Transverse colon (tissue), 4 donors: ENCODE measurements at regions of chr1 and their contacts with region 1.

Region 1: DNA sequence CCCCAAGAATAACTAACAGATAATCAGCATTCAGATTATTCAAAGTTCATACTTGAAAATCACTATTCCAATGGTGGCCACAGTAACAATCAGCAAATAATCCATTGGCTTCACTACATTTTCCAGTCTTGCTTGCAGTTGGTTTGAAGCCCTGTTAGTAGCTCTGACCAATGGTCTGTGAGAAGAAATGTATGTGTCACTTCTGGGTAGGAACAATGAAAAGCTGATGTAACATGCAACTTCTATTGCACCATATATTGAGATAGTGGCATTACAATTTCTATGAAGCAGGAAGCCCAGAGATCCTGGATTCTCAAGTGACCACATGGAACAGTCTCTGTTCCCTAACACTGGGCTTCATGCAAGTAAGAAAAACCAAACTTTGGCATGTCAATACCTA is 250.9 kb upstream of the DAB1 start:
- DNase-seq: no peak
- H3K4me3 ChIP-seq: no peak overlapping the region
- H3K27ac ChIP-seq: no peak overlapping the region
- H3K4me1 ChIP-seq: no peaks in the 10 kb centered on the region
- H3K27me3 ChIP-seq: no peaks in the 10 kb centered on the region
- CTCF ChIP-seq: no peak
- EP300 ChIP-seq: no peak
- POLR2A ChIP-seq: no peak

Region 2: DNA sequence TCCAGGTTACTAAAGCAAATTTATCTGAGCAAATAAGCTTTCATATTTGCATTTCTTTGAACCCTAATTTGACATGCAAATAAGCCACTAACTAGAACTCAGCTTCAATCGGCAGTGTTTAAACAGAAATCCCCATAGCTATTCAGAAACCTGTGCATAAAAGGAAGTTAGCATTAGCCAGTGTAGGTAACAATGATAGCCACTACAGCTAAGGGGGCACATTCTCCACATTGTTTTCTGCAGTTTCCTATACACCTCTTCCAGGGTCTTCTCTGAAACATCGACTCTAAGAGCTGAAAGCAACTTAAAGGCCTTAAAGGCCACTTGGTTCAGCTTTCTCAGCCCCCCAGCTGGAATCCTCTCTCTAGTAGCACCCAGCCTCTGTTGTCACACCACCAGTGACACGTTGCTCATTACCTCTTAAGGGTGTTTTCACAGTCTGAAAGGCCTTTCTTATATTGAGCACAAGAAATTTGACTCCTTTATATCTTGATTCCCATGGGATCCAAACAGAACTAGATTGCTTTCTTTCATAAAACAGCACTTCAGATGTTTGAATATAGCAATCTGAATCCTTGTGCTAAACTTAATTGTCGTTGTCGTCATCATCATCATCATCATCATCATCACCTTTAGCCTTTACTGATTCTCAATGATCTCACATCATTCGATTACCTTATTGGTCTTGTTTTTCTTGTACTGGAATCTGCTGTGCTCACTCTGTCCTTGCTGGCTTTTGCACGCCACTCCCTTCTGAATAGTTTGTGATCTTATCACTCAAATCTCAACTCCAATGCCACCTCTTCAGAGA is 157.0 kb before region 1 on chr1:
- in situ Hi-C with region 1: no loop called
- intact Hi-C with region 1: no loop called
- DNase-seq: no peak
- H3K4me3 ChIP-seq: no peak overlapping the region
- H3K27ac ChIP-seq: no peak overlapping the region
- H3K4me1 ChIP-seq: no peaks in the 10 kb centered on the region
- H3K27me3 ChIP-seq: no peaks in the 10 kb centered on the region
- CTCF ChIP-seq: no peak
- EP300 ChIP-seq: no peak
- POLR2A ChIP-seq: no peak

Region 3: GRCh38 chr1:57655161-57655560 is 19.6 kb before region 1 on chr1:
- in situ Hi-C with region 1: no loop called
- intact Hi-C with region 1: loop called (anchors 1 kb)
- DNase-seq: no peak
- H3K4me3 ChIP-seq: no peak overlapping the region
- H3K27ac ChIP-seq: no peak overlapping the region
- H3K4me1 ChIP-seq: no peaks in the 10 kb centered on the region
- H3K27me3 ChIP-seq: no peaks in the 10 kb centered on the region
- CTCF ChIP-seq: no peak
- EP300 ChIP-seq: no peak
- POLR2A ChIP-seq: no peak

Region 4: DNA sequence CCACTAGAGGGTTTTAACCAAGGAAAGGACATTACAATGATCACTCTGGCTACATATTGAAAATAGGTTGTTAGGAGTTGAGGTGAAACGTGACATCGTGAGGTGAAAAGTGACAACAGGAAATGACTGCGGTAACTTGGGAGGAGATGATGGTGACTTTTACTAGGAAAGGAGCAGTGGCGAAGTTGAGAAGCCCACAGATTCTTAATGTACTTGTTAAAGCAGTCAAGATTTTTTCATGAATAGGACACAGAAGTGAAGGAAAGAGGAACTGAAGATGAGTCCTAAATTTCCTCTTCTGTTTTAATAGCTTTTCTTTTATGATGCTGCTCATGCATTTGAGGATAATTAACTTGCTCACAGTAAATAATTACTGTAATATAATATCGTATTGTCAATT is 812.2 kb after region 1 on chr1:
- in situ Hi-C with region 1: no loop called
- intact Hi-C with region 1: loop called (anchors 5 kb)
- DNase-seq: no peak
- H3K4me3 ChIP-seq: no peak overlapping the region
- H3K27ac ChIP-seq: no peak overlapping the region
- H3K4me1 ChIP-seq: no peaks in the 10 kb centered on the region
- H3K27me3 ChIP-seq: no peaks in the 10 kb centered on the region
- CTCF ChIP-seq: no peak
- EP300 ChIP-seq: no peak
- POLR2A ChIP-seq: no peak